HCT116 (cell line): ENCODE measurements at regions of chrX and their contacts with region 1.

Region 1: GRCh38 chrX:58025979-58026378 is 115.7 kb upstream of the ZXDA start:
- DNase-seq: peak; percentile 26
- ATAC-seq: no peak
- H3K4me3 ChIP-seq: no peak overlapping the region
- H3K27ac ChIP-seq: no peak overlapping the region
- H3K4me1 ChIP-seq: no peaks in the 10 kb centered on the region
- H3K27me3 ChIP-seq: no peaks in the 10 kb centered on the region
- CTCF ChIP-seq: peak; percentile 13 to 50 (median 37); a peak in 4 of 6 replicates
- POLR2A ChIP-seq: no peak
- RAD21 ChIP-seq: peak; percentile 39

Region 2: GRCh38 chrX:57573754-57574153 is 452.2 kb before region 1 on chrX:
- CTCF ChIA-PET with region 1: no interaction called
- POLR2A ChIA-PET with region 1: no interaction called
- RAD21 ChIA-PET with region 1: no interaction called
- intact Hi-C with region 1: loop called (anchors 5 kb)
- DNase-seq: no peak
- ATAC-seq: peak; percentile 70
- H3K4me3 ChIP-seq: no peak overlapping the region
- H3K27ac ChIP-seq: no peak overlapping the region
- H3K4me1 ChIP-seq: no peaks in the 10 kb centered on the region
- H3K27me3 ChIP-seq: no peaks in the 10 kb centered on the region
- CTCF ChIP-seq: peak; percentile 21 to 50 (median 42); a peak in 3 of 6 replicates
- POLR2A ChIP-seq: no peak
- RAD21 ChIP-seq: peak; percentile 47

Region 3: GRCh38 chrX:57964975-57965374 is 61.0 kb before region 1 on chrX:
- CTCF ChIA-PET with region 1: no interaction called
- POLR2A ChIA-PET with region 1: no interaction called
- RAD21 ChIA-PET with region 1: no interaction called
- intact Hi-C with region 1: loop called (anchors 10 kb)
- DNase-seq: no peak
- ATAC-seq: no peak
- H3K4me3 ChIP-seq: no peak overlapping the region
- H3K27ac ChIP-seq: no peak overlapping the region
- H3K4me1 ChIP-seq: no peaks in the 10 kb centered on the region
- H3K27me3 ChIP-seq: no peaks in the 10 kb centered on the region
- CTCF ChIP-seq: no peak
- POLR2A ChIP-seq: no peak
- RAD21 ChIP-seq: no peak

Region 4: GRCh38 chrX:57984620-57985019 is 41.4 kb before region 1 on chrX:
- CTCF ChIA-PET with region 1: no interaction called
- POLR2A ChIA-PET with region 1: no interaction called
- RAD21 ChIA-PET with region 1: no interaction called
- intact Hi-C with region 1: no loop called
- DNase-seq: no peak
- ATAC-seq: no peak
- H3K4me3 ChIP-seq: no peak overlapping the region
- H3K27ac ChIP-seq: no peak overlapping the region
- H3K4me1 ChIP-seq: no peaks in the 10 kb centered on the region
- H3K27me3 ChIP-seq: no peaks in the 10 kb centered on the region
- CTCF ChIP-seq: no peak
- POLR2A ChIP-seq: no peak
- RAD21 ChIP-seq: no peak